AG04449 (cell line): ENCODE measurements at regions of chr10 and their contacts with region 1.

Region 1: DNA sequence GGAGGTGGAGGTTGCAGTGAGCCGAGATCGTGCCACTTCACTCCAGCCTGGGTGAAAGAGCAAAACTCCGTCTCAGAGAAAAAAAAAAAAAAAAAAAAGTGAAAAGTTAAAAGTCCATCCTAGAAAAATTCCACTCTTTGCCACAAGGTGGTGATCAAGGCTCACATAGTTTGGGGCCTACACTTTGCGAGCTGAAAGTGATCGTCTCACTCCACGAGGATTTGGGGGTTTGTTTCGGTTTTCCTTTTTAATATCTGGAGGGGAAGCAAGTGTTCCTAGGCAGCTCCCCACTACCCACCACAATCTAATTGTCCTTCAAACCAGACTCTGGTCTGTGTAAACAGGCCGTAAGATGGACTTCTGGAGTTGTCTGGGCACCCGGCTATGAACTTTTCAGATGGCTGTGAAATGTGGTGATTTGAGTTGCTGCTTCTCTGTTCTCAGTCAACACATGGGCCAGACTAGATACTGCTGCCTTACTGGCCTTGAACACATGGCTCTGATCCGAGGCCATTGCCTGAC is 27.1 kb downstream of the PRLHR start:
- DNase-seq: no peak
- H3K4me3 ChIP-seq: no peak overlapping the region; the same call in 1 of the 2 replicates
- CTCF ChIP-seq: peak; percentile 55

Region 2: GRCh38 chr10:118531105-118531852 is 37.1 kb before region 1 on chr10:
- CTCF ChIA-PET with region 1: no interaction called
- POLR2A ChIA-PET with region 1: no interaction called
- DNase-seq: no peak
- H3K4me3 ChIP-seq: no peak overlapping the region
- CTCF ChIP-seq: no peak

Region 3: DNA sequence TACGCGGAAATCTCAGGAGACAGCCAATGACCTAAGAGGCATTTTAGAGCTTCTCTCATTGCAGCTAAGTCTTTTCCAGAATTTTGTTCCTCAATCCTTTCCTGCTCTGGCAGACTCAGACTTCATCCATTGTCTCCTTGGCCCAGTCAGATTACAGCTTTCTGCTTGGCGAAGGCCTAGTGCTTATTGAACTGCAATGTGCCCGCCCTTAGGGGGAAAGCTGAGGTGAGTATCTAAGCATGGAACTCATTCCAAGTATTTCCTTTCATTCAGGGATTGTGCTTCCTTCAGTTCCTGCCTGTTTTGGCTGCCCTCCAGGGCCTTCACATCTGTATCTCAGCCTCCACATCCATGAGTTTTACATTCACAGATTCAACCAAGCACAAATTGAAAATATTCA is 10.4 kb before region 1 on chr10:
- CTCF ChIA-PET with region 1: interaction called, 11 read pairs
- POLR2A ChIA-PET with region 1: no interaction called
- DNase-seq: no peak
- H3K4me3 ChIP-seq: no peak overlapping the region
- CTCF ChIP-seq: no peak

Region 4: GRCh38 chr10:118607768-118608354 is 39.5 kb after region 1 on chr10:
- CTCF ChIA-PET with region 1: no interaction called
- POLR2A ChIA-PET with region 1: no interaction called
- DNase-seq: no peak
- H3K4me3 ChIP-seq: no peak overlapping the region
- CTCF ChIP-seq: no peak

Region 5: DNA sequence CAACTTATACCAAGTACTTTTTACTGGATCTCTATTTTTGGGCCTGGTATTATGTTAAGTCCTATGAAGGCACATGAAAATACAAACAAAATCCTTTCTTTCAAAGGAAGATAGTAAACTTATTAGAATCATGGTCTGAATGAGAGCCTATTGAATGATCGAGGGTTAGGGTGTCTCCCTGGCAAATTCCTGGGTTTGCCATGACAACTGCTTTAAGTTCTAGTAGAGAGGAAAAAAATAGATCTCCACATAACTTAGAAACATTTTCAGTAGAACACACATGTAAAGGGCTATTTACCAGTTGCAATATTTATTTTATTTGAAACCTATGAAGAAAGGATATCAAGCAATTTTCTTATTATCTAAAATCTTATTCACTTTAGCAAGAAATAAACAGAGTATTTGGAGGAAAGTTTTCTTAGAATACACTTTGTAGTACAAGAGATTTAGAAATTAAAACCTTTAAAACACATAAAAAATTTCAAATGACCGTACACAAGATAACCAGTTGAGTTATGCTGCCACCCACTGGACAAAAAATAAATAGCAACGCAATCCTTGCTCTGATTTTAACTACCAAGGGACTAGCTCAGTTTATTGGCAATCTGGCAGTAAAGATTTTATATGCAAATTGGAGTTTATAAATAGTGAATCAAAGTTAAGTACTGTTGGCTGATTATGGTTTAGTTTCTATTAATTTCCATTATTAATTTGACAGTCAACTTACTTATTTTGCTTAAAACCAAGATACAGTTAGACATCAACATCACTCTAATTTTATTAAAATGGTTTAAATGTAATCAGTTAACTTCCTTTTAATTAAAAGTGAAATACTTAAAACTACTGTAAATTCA is 152.5 kb after region 1 on chr10:
- CTCF ChIA-PET with region 1: interaction called, 129 read pairs
- POLR2A ChIA-PET with region 1: no interaction called
- DNase-seq: no peak
- H3K4me3 ChIP-seq: no peak overlapping the region
- CTCF ChIP-seq: peak; percentile 51

Region 6: GRCh38 chr10:118754720-118755480 is 186.5 kb after region 1 on chr10 and contains the start of gene CACUL1:
- CTCF ChIA-PET with region 1: interaction called, 11 read pairs
- POLR2A ChIA-PET with region 1: no interaction called
- DNase-seq: peak; percentile 97
- H3K4me3 ChIP-seq: peak within 1 kb of the TSS; percentile 90
- CTCF ChIP-seq: no peak

Region 7: DNA sequence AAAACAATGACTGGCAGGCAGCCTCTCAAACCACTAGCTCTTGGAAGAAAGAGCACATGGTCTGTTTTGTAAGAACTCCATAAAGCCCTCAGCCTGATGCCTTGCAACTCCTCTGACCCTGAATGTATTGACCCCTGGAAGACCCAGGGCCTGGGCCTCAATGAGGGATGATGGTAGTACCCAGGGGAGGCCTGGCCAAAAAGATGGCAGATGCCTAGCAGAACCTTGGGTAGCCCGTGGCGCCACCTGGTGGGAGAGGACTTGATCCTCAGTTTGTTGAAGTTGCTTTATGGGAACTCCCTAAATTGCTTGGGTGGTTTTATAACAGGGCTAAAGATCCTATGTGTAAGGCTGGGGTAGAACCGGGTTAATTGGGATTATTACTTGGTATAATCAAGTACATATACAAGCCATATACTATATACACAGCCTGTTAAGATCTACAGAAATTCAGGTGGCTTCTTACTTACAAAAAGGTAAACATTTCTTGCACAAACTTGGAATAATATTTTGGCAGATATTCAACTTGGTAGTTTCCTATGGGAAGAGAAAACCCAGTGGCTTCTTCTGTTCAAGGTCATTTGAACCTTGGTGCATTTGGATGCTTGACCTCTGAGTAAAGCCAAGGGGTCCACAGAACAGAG is 282.2 kb after region 1 on chr10:
- CTCF ChIA-PET with region 1: interaction called, 19 read pairs
- POLR2A ChIA-PET with region 1: no interaction called
- DNase-seq: no peak
- H3K4me3 ChIP-seq: no peak overlapping the region
- CTCF ChIP-seq: peak; percentile 48